Heart right ventricle (tissue), 16 donors: ENCODE measurements at regions of chr19 and their contacts with region 1.

Region 1: GRCh38 chr19:36152352-36153091 is at the start of gene COX7A1:
- DNase-seq: peak; percentile 86 to 87
- ATAC-seq: peak; percentile 88 to 95 (median 92)
- H3K4me3 ChIP-seq: peak within 1 kb of the TSS; percentile 58 to 94 (median 72)
- H3K27ac ChIP-seq: peak within 1 kb of the TSS; percentile 92 to 100 (median 100)
- H3K4me1 ChIP-seq: peaks cover 9 to 62% (median 27%) of the 10 kb centered on the region in 9 donors
- H3K27me3 ChIP-seq: no peaks in the 10 kb centered on the region
- CTCF ChIP-seq: no peak
- total RNA-seq, gene COX7A1: 1,564 to 3,571 (median 2,793) TPM

Region 2: DNA sequence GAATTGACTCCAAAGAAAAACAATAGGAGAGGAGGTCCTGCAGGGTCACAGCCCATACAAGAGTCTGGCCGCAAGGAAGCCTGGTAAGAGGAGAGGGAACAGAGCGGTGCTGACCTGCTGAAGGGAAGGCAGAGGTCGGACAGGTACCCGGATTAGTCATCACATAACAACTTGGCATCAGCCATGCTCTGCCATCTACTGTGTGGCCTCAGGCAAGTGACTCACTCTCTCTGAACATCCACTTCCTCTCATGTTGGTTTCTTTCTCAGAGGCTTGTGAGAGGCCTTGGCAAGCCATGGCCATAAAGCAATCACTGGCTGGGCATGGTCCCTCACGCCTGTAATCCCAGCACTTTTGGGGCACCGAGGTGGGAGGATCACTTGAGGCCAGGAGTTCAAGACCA is 20.0 kb before region 1 on chr19:
- intact Hi-C with region 1: loop called in 2 of 10 experiments (anchors 1 kb)
- DNase-seq: no peak
- ATAC-seq: no peak
- H3K4me3 ChIP-seq: no peak overlapping the region
- H3K27ac ChIP-seq: peak overlapping the region in 1 of 10 donors; percentile 59
- H3K4me1 ChIP-seq: peaks cover 0 to 52% (median 19%) of the 10 kb centered on the region in 9 donors
- H3K27me3 ChIP-seq: no peaks in the 10 kb centered on the region
- CTCF ChIP-seq: no peak

Region 3: DNA sequence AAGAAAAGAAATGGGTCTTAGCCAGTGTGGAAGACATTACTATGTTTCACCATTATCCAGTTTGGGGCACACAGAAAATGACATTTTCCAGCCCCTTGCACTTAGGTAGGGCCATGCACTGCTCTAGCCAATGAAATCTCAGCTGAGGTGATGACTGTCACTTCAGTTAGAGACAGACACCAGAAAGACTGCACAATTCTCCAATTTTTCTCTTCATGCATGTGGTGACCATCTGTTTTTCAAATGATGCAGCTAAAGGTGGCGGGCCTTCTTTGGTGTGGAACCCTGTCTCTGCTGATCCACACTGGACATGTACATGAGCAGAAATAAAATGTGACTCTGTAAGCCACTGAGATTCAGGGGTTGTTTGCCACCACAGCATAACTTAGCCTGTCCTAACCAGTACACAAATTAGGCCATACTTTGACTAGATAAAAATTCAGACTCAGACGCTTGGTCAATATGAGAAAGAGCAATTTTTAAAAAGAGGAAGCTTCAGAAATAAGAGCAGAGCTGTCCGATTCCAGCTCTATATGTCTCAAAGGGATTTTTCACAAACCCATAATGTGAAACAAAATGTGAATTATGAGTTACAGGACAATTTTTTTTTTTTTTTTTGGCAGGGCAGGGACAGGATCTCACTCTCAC is 55.2 kb after region 1 on chr19:
- intact Hi-C with region 1: no loop called
- DNase-seq: no peak
- ATAC-seq: no peak
- H3K4me3 ChIP-seq: no peak overlapping the region
- H3K27ac ChIP-seq: no peak overlapping the region
- H3K4me1 ChIP-seq: no peaks in the 10 kb centered on the region
- H3K27me3 ChIP-seq: no peaks in the 10 kb centered on the region
- CTCF ChIP-seq: no peak